Colonic mucosa (tissue), 4 donors: ENCODE measurements at regions of chr1 and their contacts with region 1.

Region 1: DNA sequence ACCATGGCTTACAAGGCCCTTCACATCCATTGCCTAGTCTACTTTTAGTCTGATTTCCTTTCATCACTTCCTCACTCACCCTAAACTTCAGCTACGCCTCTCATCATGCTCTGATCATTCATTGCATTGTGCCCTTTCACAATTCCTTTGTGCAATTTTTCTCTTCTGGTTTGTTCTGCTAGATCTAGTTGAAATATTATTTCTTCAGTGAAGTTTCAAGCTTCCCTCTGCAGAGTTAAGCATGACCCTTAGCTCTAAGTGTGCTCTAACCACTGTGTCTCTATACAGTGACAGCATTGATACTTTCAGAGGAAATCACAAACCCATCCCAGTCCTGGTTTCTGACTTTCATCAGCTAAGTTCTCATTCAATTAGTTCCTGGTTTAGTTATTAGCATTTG is 166.1 kb downstream of the PLA2G4A start:
- DNase-seq: no peak
- H3K4me3 ChIP-seq: no peak overlapping the region
- H3K27ac ChIP-seq: no peak overlapping the region
- H3K4me1 ChIP-seq: no peaks in the 10 kb centered on the region
- H3K27me3 ChIP-seq: no peaks in the 10 kb centered on the region
- CTCF ChIP-seq: no peak

Region 2: DNA sequence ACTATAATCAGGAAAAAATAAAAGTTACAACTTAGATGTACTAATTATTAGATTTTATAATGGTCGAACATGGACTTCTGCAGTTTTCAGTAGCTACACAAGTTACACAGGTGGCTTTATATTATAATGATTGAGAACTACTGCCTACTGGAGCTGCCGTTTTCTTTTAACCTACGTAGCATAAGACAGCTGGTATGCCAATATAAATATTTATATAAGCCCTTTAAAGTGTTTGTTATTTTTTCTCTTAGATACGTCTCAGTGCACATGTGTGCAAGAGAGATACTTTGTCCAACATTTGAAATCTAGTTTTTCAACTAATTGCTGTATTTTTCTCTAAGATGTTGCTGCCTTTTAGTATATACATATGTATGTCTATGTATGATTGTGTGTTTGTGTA is 576.4 kb before region 1 on chr1:
- intact Hi-C with region 1: loop called (anchors 10 kb)
- DNase-seq: no peak
- H3K4me3 ChIP-seq: no peak overlapping the region
- H3K27ac ChIP-seq: no peak overlapping the region
- H3K4me1 ChIP-seq: no peaks in the 10 kb centered on the region
- H3K27me3 ChIP-seq: no peaks in the 10 kb centered on the region
- CTCF ChIP-seq: no peak

Region 3: DNA sequence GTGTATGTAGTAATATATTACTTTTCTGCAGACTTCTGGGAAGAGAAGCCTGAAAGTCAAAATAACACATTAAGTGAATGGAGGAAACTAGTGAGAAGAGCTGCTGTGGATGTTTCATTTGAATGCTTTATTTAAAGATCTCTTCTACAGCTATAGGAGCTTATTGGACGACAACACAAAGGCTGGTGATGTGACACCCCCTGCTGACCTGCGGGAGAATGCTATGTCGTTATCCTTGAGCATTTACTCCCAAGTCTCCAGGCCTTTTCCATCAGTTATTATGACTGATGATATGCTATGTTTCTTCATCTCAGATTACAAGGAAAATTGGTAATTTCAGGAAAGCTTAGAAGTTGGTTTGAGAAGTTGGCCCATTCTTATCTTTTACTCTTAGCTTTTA is 188.4 kb before region 1 on chr1:
- intact Hi-C with region 1: no loop called
- DNase-seq: no peak
- H3K4me3 ChIP-seq: no peak overlapping the region
- H3K27ac ChIP-seq: no peak overlapping the region
- H3K4me1 ChIP-seq: no peaks in the 10 kb centered on the region
- H3K27me3 ChIP-seq: no peaks in the 10 kb centered on the region
- CTCF ChIP-seq: no peak

Region 4: GRCh38 chr1:187129132-187129531 is 134.2 kb after region 1 on chr1:
- intact Hi-C with region 1: no loop called
- DNase-seq: no peak
- H3K4me3 ChIP-seq: no peak overlapping the region
- H3K27ac ChIP-seq: no peak overlapping the region
- H3K4me1 ChIP-seq: no peaks in the 10 kb centered on the region
- H3K27me3 ChIP-seq: no peaks in the 10 kb centered on the region
- CTCF ChIP-seq: no peak